GM12878 (cell line): ENCODE measurements at regions of chr12 and their contacts with region 1.

Region 1: DNA sequence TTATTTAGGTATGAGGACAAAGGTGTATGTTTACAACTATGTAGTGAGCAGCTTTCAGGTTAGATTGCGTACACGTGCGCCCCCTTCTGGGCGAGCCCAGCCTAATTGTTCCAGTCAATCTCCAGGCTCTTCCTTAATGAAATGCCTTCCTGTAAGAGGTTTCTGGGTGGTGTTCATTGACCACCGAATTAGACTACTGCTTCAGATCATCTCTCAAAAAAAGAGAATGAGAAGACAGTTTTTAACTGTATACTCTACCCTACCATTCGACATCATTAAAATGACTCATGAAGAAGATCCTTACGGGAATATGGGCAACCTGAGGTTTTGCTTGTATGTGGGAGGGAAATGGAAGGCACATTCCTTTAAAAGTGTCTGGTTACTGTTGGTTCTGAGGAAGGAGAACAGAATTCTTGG is 2.1 kb downstream of the LUM start:
- DNase-seq: peak; percentile 15
- ATAC-seq: peak; percentile 90
- H3K4me3 ChIP-seq: no peak overlapping the region
- H3K27ac ChIP-seq: no peak overlapping the region
- H3K4me1 ChIP-seq: no peaks in the 10 kb centered on the region
- H3K27me3 ChIP-seq: no peaks in the 10 kb centered on the region
- CTCF ChIP-seq: peak; percentile 67 to 77 (median 74)
- EP300 ChIP-seq: no peak
- POLR2A ChIP-seq: no peak
- RAD21 ChIP-seq: peak; percentile 65

Region 2: GRCh38 chr12:90959538-90960139 is 149.5 kb before region 1 on chr12:
- CTCF ChIA-PET with region 1: interaction called, 13 read pairs
- POLR2A ChIA-PET with region 1: no interaction called
- RAD21 ChIA-PET with region 1: no interaction called
- SMC1A ChIA-PET with region 1: interaction called, 6 read pairs
- in situ Hi-C with region 1: no loop called
- intact Hi-C with region 1: no loop called
- DNase-seq: no peak
- ATAC-seq: peak; percentile 84
- H3K4me3 ChIP-seq: no peak overlapping the region
- H3K27ac ChIP-seq: no peak overlapping the region
- H3K4me1 ChIP-seq: no peaks in the 10 kb centered on the region
- H3K27me3 ChIP-seq: no peaks in the 10 kb centered on the region
- CTCF ChIP-seq: peak; percentile 66 to 71 (median 69)
- EP300 ChIP-seq: no peak
- POLR2A ChIP-seq: no peak
- RAD21 ChIP-seq: peak; percentile 60

Region 3: GRCh38 chr12:90995010-90995409 is 114.1 kb before region 1 on chr12:
- CTCF ChIA-PET with region 1: interaction called, 14 read pairs
- POLR2A ChIA-PET with region 1: no interaction called
- RAD21 ChIA-PET with region 1: no interaction called
- SMC1A ChIA-PET with region 1: interaction called, 3 read pairs
- in situ Hi-C with region 1: no loop called
- intact Hi-C with region 1: no loop called
- DNase-seq: no peak
- ATAC-seq: no peak
- H3K4me3 ChIP-seq: no peak overlapping the region
- H3K27ac ChIP-seq: no peak overlapping the region
- H3K4me1 ChIP-seq: no peaks in the 10 kb centered on the region
- H3K27me3 ChIP-seq: no peaks in the 10 kb centered on the region
- CTCF ChIP-seq: no peak
- EP300 ChIP-seq: no peak
- POLR2A ChIP-seq: no peak
- RAD21 ChIP-seq: no peak

Region 4: DNA sequence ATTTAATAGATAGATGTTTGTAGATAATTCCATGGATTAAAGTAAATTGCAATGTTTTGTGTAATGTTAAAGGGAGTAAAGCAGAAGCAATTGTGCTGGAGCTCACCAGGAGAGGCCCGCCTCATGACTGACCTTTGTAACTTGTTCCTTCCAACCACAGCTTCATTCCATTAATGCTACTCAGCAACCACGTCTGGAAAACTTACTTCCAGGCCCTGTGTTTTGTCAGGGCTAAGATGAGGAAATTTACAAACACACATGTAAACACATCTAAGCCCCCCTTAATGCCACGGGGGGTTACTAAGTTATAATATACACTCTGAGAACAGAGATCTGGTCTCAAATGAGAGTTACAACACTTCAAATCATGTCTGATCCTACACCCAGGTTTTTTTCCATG is 10.2 kb before region 1 on chr12:
- CTCF ChIA-PET with region 1: interaction called, 23 read pairs
- POLR2A ChIA-PET with region 1: no interaction called
- RAD21 ChIA-PET with region 1: interaction called, 3 read pairs
- SMC1A ChIA-PET with region 1: interaction called, 5 read pairs
- in situ Hi-C with region 1: no loop called
- intact Hi-C with region 1: no loop called
- DNase-seq: no peak
- ATAC-seq: no peak
- H3K4me3 ChIP-seq: no peak overlapping the region
- H3K27ac ChIP-seq: no peak overlapping the region
- H3K4me1 ChIP-seq: no peaks in the 10 kb centered on the region
- H3K27me3 ChIP-seq: no peaks in the 10 kb centered on the region
- CTCF ChIP-seq: no peak
- EP300 ChIP-seq: no peak
- POLR2A ChIP-seq: no peak
- RAD21 ChIP-seq: no peak

Region 5: GRCh38 chr12:91355150-91356006 is 246.2 kb after region 1 on chr12:
- CTCF ChIA-PET with region 1: interaction called, 12 read pairs
- POLR2A ChIA-PET with region 1: no interaction called
- RAD21 ChIA-PET with region 1: no interaction called
- SMC1A ChIA-PET with region 1: no interaction called
- in situ Hi-C with region 1: no loop called
- intact Hi-C with region 1: no loop called
- DNase-seq: peak; percentile 3
- ATAC-seq: peak; percentile 99
- H3K4me3 ChIP-seq: no peak overlapping the region
- H3K27ac ChIP-seq: no peak overlapping the region
- H3K4me1 ChIP-seq: no peaks in the 10 kb centered on the region
- H3K27me3 ChIP-seq: no peaks in the 10 kb centered on the region
- CTCF ChIP-seq: peak; percentile 68 to 82 (median 72); a peak in 5 of 6 replicates
- EP300 ChIP-seq: no peak
- POLR2A ChIP-seq: no peak
- RAD21 ChIP-seq: peak; percentile 75